ENCODE measurements at regions of chr12 and their contacts with region 1.

Region 1: GRCh38 chr12:57078519-57079404 is at the start of gene NEMP1:
- DNase-seq: peak; percentile 97
- H3K4me3 Mint-ChIP-seq: peak within 1 kb of the TSS; percentile 97
- H3K27ac Mint-ChIP-seq: peak within 1 kb of the TSS; percentile 97
- H3K4me1 Mint-ChIP-seq: peaks cover 35% of the 10 kb centered on the region
- H3K27me3 Mint-ChIP-seq: no peaks in the 10 kb centered on the region
- total RNA-seq, gene NEMP1: 51.7 to 59.2 TPM

Region 2: GRCh38 chr12:56751712-56752598 is 326.8 kb before region 1 on chr12 and contains the start of gene PRIM1:
- CTCF ChIA-PET with region 1: interaction called, 3 read pairs
- POLR2A ChIA-PET with region 1: interaction called, 11 read pairs
- DNase-seq: peak; percentile 89
- H3K4me3 Mint-ChIP-seq: peak within 1 kb of the TSS; percentile 99
- H3K27ac Mint-ChIP-seq: peak within 1 kb of the TSS; percentile 97
- H3K4me1 Mint-ChIP-seq: peaks cover 50% of the 10 kb centered on the region
- H3K27me3 Mint-ChIP-seq: no peaks in the 10 kb centered on the region
- total RNA-seq, gene PRIM1: 45.0 to 46.2 TPM

Region 3: DNA sequence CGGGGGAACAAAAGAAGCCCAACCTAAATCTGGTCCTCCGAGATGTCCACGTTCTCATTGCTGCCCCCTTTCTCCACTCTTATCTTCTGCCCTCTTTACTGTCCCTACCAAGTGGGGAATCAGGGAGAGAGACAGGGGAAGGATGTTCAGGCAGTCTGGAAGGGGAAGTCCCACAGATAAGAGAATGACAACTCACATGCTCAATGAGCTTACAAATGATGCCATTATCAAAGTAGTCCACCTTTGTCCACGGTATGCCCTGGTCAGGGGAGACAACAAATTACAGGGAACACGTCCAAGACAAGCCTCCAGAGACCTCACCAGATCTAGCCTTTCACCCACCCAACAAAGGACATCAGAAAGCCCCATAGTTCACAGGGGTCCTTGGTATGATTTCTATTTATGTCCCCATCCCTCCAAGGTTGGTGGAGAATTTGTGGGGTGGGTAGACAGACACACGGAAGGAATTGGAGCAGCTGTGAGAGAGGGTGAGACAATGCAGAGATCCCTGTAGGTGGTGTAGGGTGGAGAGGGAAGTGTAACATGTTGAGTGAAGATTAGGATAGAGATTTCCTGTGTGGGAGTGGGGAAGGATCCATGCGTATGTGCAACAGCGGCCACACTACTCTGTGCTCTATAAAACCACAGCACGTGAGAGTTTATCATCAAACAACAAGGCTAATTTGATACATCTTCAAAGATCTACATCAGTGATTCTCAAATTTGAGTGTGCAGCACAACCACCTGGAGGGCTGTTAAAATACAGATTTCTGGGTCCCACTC is 39.6 kb before region 1 on chr12:
- CTCF ChIA-PET with region 1: no interaction called
- POLR2A ChIA-PET with region 1: no interaction called
- DNase-seq: no peak
- H3K4me3 Mint-ChIP-seq: no peak overlapping the region
- H3K27ac Mint-ChIP-seq: no peak overlapping the region
- H3K4me1 Mint-ChIP-seq: no peaks in the 10 kb centered on the region
- H3K27me3 Mint-ChIP-seq: peaks cover 14% of the 10 kb centered on the region

Region 4: GRCh38 chr12:57063991-57064685 is 14.6 kb before region 1 on chr12:
- CTCF ChIA-PET with region 1: interaction called, 24 read pairs
- POLR2A ChIA-PET with region 1: interaction called, 35 read pairs
- DNase-seq: peak; percentile 54
- H3K4me3 Mint-ChIP-seq: peak overlapping the region; percentile 62
- H3K27ac Mint-ChIP-seq: peak overlapping the region; percentile 89
- H3K4me1 Mint-ChIP-seq: peaks cover 35% of the 10 kb centered on the region
- H3K27me3 Mint-ChIP-seq: no peaks in the 10 kb centered on the region

Region 5: DNA sequence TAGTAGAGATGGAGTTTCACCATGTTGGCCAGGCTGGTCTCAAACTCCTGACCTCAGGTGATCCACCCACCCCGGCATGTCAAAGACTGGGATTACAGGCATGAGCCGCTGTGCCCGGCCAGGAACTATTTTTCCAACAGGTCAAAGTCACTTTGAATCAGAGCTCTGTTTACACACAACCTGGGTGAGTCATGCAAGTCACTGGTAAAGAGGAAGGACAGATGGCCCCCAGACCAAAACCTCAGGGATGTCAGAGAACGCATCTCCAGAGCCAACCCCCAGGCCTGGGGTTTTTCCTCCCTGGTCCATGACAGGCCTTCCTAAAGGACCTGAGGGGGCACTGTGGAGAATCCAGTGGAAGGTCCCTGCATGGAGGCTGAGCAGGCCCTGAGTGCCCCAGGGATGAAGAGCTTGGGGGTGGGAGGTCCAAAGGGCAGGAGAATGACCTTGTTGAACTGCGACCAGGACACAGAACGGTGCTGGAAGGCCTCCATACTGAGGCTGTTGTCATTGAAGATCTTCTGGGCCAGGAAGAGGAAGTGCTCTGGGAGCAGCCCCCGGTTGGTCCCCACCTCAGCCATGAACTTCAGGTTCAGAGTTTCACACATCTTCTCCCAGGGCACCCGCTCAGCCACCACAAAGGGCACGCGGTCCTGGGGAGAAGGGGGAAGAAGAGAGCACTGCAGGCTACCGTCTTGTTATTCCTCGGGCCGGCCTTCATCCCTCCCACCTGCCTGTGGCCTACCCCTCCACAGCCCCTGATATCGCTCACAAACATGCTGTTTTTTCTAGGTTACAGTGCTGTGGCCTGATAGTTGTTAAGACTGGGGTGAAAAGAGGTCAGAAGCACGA is 23.3 kb after region 1 on chr12:
- CTCF ChIA-PET with region 1: interaction called, 5 read pairs
- POLR2A ChIA-PET with region 1: interaction called, 17 read pairs
- DNase-seq: no peak
- H3K4me3 Mint-ChIP-seq: no peak overlapping the region
- H3K27ac Mint-ChIP-seq: peak overlapping the region; percentile 26
- H3K4me1 Mint-ChIP-seq: peaks cover 20% of the 10 kb centered on the region
- H3K27me3 Mint-ChIP-seq: no peaks in the 10 kb centered on the region

Region 6: DNA sequence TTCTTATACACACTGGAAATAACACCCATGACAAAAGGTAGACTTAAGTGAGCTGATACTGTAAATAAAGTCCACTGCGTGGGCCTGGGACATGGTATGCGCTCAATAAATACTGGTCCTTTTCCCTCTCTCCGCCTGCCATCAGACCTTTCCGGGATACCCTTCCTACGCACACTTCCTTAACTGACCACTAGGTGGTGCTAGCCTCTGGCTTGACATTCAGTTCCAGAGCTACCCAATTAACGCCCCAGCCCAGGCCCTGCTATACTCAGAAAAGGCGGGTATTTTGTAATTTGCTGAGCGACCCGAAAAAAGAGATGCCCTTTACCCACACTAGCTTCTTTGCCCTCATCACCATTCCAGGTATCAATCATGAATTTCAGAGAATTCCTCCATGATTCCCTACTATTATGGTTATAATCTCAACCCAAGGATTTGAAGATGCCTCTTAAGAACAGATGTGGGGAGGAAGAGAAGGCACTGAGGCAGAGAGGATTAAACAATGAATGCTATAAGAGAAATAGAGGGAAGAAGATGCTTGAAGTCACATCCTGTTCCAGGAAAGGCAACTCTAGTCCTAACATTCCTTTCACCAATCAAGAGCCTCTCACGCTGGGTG is 45.6 kb after region 1 on chr12:
- CTCF ChIA-PET with region 1: interaction called, 13 read pairs
- POLR2A ChIA-PET with region 1: interaction called, 11 read pairs
- DNase-seq: peak; percentile 76
- H3K4me3 Mint-ChIP-seq: no peak overlapping the region
- H3K27ac Mint-ChIP-seq: no peak overlapping the region
- H3K4me1 Mint-ChIP-seq: peaks cover 5% of the 10 kb centered on the region
- H3K27me3 Mint-ChIP-seq: peaks cover 37% of the 10 kb centered on the region

Region 7: GRCh38 chr12:57238854-57239554 is 160.2 kb after region 1 on chr12:
- CTCF ChIA-PET with region 1: interaction called, 11 read pairs
- POLR2A ChIA-PET with region 1: no interaction called
- DNase-seq: peak; percentile 92
- H3K4me3 Mint-ChIP-seq: peak overlapping the region; percentile 95
- H3K27ac Mint-ChIP-seq: peak overlapping the region; percentile 83
- H3K4me1 Mint-ChIP-seq: peaks cover 79% of the 10 kb centered on the region
- H3K27me3 Mint-ChIP-seq: peaks cover 48% of the 10 kb centered on the region

Region 8: GRCh38 chr12:57272337-57273151 is 193.8 kb after region 1 on chr12:
- CTCF ChIA-PET with region 1: no interaction called
- POLR2A ChIA-PET with region 1: no interaction called
- DNase-seq: no peak
- H3K4me3 Mint-ChIP-seq: no peak overlapping the region
- H3K27ac Mint-ChIP-seq: no peak overlapping the region
- H3K4me1 Mint-ChIP-seq: peaks cover 2% of the 10 kb centered on the region
- H3K27me3 Mint-ChIP-seq: no peaks in the 10 kb centered on the region